ENCODE measurements at regions of chr14 and their contacts with region 1.

Region 1: GRCh38 chr14:104078031-104078455 is 7.5 kb upstream of the ASPG start:
- DNase-seq: peak; percentile 91
- H3K4me3 ChIP-seq: no peak overlapping the region
- H3K27ac ChIP-seq: no peak overlapping the region
- H3K4me1 ChIP-seq: no peaks in the 10 kb centered on the region
- H3K27me3 ChIP-seq: no peaks in the 10 kb centered on the region
- CTCF ChIP-seq: peak; percentile 100

Region 2: DNA sequence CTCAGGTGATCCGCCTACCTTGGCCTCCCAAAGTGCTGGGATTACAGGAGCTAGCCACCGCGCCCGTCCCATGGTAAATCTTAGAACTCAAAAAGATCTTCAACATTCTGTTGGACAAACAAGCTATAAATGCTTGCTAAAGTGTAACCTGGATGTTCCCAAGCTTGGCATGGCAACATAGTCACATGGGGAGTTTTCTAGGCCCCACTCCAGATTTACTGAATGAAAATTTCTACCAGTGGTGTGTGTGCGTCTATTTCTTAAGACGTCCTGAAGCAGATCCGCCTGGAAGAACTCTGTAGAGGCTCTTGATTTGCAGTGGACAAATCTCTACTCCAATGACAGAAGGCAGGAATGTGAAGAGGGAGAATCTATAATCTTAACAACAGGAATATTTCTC is 302.5 kb before region 1 on chr14:
- CTCF ChIA-PET with region 1: no interaction called
- POLR2A ChIA-PET with region 1: no interaction called
- intact Hi-C with region 1: no loop called
- DNase-seq: peak; percentile 21
- H3K4me3 ChIP-seq: no peak overlapping the region
- H3K27ac ChIP-seq: peak overlapping the region; percentile 57
- H3K4me1 ChIP-seq: no peaks in the 10 kb centered on the region
- H3K27me3 ChIP-seq: no peaks in the 10 kb centered on the region
- CTCF ChIP-seq: no peak

Region 3: DNA sequence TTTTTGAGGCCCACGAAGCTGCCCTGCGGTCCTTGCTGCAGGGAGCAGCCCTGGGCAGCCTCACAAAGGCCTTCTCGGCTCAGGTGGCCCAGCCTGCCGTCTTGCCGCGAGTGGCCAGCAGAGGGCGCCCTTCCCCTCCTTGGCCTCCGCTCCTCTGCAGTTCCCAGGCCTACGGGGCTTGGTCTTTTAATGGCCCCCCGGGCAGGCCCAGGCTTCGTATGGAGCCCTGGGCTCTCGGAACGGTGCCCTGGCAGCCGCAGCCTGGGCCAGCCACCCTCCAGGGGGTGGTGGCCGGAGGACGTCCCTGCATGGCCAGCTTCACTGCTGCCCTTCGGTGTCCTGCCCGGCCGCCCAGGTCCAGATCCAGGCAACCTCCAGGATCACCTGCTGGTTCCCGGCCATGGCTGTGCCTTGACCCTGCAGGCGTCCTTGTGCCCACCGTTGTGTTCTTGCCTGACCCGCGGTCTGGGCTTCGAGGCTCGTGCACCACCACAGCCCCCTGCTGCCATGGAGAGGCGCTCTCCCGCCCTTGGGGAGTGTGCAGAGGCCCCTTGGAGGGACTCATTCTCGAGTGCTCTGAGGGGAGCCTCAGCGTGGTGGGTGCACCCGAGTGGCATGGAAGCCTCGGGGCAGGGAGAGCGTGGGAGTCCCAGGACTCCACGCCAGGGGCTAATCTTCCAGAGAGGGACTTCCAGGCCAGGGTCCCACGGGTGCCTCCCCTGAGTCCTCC is 16.8 kb after region 1 on chr14:
- CTCF ChIA-PET with region 1: interaction called, 11 read pairs
- POLR2A ChIA-PET with region 1: no interaction called
- intact Hi-C with region 1: no loop called
- DNase-seq: peak; percentile 79
- H3K4me3 ChIP-seq: no peak overlapping the region
- H3K27ac ChIP-seq: no peak overlapping the region
- H3K4me1 ChIP-seq: peaks cover 8% of the 10 kb centered on the region
- H3K27me3 ChIP-seq: no peaks in the 10 kb centered on the region
- CTCF ChIP-seq: peak; percentile 97

Region 4: GRCh38 chr14:104130974-104131651 is 53.1 kb after region 1 on chr14:
- CTCF ChIA-PET with region 1: no interaction called
- POLR2A ChIA-PET with region 1: no interaction called
- intact Hi-C with region 1: loop called (anchors 1 kb)
- DNase-seq: peak; percentile 67
- H3K4me3 ChIP-seq: no peak overlapping the region
- H3K27ac ChIP-seq: no peak overlapping the region
- H3K4me1 ChIP-seq: peaks cover 20% of the 10 kb centered on the region
- H3K27me3 ChIP-seq: peaks cover 18% of the 10 kb centered on the region
- CTCF ChIP-seq: peak; percentile 82

Region 5: DNA sequence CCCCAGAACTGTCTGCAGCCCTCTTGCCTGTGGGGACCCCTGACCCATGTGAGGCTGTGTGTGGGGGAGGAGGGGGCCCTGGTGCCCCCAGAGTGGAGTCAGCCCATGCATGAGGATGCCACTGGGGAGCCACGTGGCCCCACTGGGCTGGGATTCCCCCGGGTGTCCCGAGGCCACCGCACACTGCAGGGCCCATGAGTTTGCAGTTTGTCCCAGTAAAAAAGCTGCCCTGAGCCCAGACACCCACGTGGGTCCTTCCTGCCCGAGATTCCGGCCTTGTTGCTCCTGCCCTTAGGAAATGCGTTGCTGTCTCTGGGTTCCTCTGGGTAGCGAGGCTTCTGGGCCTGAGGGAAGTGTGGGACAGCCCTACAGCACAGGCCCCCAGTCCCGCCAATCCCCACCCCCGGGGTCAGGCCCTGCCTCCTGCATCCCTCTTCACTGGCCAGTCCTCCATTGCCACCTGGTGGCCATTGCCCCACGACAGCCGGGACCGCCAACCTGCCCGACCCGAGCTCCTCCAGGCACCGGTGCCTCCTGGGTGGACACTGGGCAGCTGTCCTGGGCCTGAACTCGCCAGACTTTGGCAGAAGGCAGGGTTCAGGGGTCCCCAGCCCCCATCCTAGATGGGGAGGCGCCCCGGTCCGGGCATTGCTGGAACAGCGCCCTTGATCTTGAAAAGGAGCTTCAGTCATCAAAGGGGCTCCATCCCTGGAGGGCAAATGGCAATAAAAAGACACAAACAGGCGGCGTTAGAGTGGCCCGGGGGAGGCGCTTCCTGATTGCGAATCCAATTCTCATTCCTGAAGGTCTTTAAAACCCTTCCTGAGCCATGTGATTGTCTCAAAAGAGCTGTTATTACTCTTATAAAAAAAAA is 485.9 kb after region 1 on chr14:
- CTCF ChIA-PET with region 1: interaction called, 16 read pairs
- POLR2A ChIA-PET with region 1: no interaction called
- intact Hi-C with region 1: loop called (anchors 5 kb)
- DNase-seq: peak; percentile 56
- H3K4me3 ChIP-seq: no peak overlapping the region
- H3K27ac ChIP-seq: no peak overlapping the region
- H3K4me1 ChIP-seq: no peaks in the 10 kb centered on the region
- H3K27me3 ChIP-seq: peaks cover 7% of the 10 kb centered on the region
- CTCF ChIP-seq: peak; percentile 74

Region 6: GRCh38 chr14:104639889-104640548 is 562.0 kb after region 1 on chr14:
- CTCF ChIA-PET with region 1: no interaction called
- POLR2A ChIA-PET with region 1: no interaction called
- intact Hi-C with region 1: loop called (anchors 1 kb)
- DNase-seq: peak; percentile 81
- H3K4me3 ChIP-seq: no peak overlapping the region
- H3K27ac ChIP-seq: no peak overlapping the region
- H3K4me1 ChIP-seq: peaks cover 15% of the 10 kb centered on the region
- H3K27me3 ChIP-seq: no peaks in the 10 kb centered on the region
- CTCF ChIP-seq: peak; percentile 98